ENCODE measurements at regions of chr4 and their contacts with region 1.

Region 1: DNA sequence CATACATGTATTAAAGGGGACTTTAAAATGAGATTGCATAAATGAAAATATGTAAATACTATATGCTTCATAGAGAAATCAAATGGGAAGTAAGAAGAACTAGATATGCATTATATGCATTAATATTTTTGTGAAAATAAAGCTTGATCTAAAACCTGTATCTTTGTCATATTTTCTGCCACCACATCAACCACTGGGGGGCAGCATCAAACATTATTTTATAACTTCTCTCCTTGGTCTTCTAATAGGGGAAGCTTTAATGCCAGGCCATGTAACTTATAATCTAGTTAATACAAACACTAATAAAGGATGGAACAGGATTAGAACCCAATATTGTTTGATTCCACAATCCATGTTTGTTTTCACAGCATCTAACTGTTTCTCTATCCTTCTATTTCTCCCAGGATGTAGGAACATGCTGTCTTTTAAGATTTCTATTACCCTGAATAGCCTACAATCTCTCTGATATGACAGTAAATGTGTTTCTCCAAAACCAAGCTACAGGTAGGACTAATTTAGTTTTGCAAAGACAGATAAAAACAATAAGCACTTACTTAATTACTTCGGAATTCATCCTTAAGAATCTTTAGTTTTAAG is 10.0 kb downstream of the QRFPR start:
- DNase-seq: peak in 2 of 3 donors; percentile 5
- H3K4me3 ChIP-seq: no peak overlapping the region
- H3K4me3 Mint-ChIP-seq: no peak overlapping the region
- H3K27ac ChIP-seq: no peak overlapping the region
- H3K27ac Mint-ChIP-seq: no peak overlapping the region
- H3K4me1 ChIP-seq: no peaks in the 10 kb centered on the region
- H3K4me1 Mint-ChIP-seq: no peaks in the 10 kb centered on the region
- H3K27me3 ChIP-seq: peaks cover 0 to 3% of the 10 kb centered on the region in 2 donors
- H3K27me3 Mint-ChIP-seq: peaks cover 2 to 9% (median 3%) of the 10 kb centered on the region in 3 donors
- CTCF ChIP-seq: peak; percentile 69

Region 2: DNA sequence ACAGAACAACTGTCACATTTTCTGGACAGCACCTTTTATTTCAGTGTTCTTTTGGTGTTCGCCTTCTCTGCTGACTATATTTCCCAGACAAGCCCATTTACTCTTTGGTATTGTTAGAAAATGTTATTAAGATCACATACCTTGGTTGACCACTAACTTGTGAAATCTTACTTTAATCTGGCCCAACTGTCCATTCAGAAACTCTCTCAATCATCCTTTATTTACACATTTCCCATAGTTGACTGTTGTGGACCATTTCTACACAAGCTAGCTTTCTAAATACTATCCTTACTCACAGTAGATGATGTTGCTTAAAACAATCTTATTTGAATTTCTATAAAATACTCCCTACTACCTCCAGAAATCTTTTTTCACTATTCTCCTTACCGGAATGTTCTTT is 54.7 kb before region 1 on chr4:
- intact Hi-C with region 1: no loop called
- DNase-seq: no peak
- H3K4me3 ChIP-seq: no peak overlapping the region
- H3K4me3 Mint-ChIP-seq: no peak overlapping the region
- H3K27ac ChIP-seq: no peak overlapping the region
- H3K27ac Mint-ChIP-seq: no peak overlapping the region
- H3K4me1 ChIP-seq: no peaks in the 10 kb centered on the region
- H3K4me1 Mint-ChIP-seq: no peaks in the 10 kb centered on the region
- H3K27me3 ChIP-seq: no peaks in the 10 kb centered on the region
- H3K27me3 Mint-ChIP-seq: peaks cover 0 to 2% (median 0%) of the 10 kb centered on the region in 3 donors
- CTCF ChIP-seq: no peak

Region 3: GRCh38 chr4:121360495-121360894 is 10.3 kb before region 1 on chr4:
- intact Hi-C with region 1: loop called in 1 of 2 experiments (anchors 1 kb)
- DNase-seq: no peak
- H3K4me3 ChIP-seq: no peak overlapping the region
- H3K4me3 Mint-ChIP-seq: no peak overlapping the region
- H3K27ac ChIP-seq: no peak overlapping the region
- H3K27ac Mint-ChIP-seq: no peak overlapping the region
- H3K4me1 ChIP-seq: no peaks in the 10 kb centered on the region
- H3K4me1 Mint-ChIP-seq: peaks cover 3% of the 10 kb centered on the region
- H3K27me3 ChIP-seq: no peaks in the 10 kb centered on the region
- H3K27me3 Mint-ChIP-seq: peaks cover 0 to 2% (median 0%) of the 10 kb centered on the region in 3 donors
- CTCF ChIP-seq: no peak

Region 4: GRCh38 chr4:121564840-121565375 is 194.1 kb after region 1 on chr4:
- intact Hi-C with region 1: no loop called
- DNase-seq: no peak
- H3K4me3 ChIP-seq: no peak overlapping the region
- H3K4me3 Mint-ChIP-seq: no peak overlapping the region
- H3K27ac ChIP-seq: no peak overlapping the region
- H3K27ac Mint-ChIP-seq: no peak overlapping the region
- H3K4me1 ChIP-seq: no peaks in the 10 kb centered on the region
- H3K4me1 Mint-ChIP-seq: no peaks in the 10 kb centered on the region
- H3K27me3 ChIP-seq: no peaks in the 10 kb centered on the region
- H3K27me3 Mint-ChIP-seq: no peaks in the 10 kb centered on the region
- CTCF ChIP-seq: no peak

Region 5: GRCh38 chr4:122099896-122100295 is 729.1 kb after region 1 on chr4:
- intact Hi-C with region 1: loop called in 1 of 2 experiments (anchors 10 kb)
- DNase-seq: no peak
- H3K4me3 ChIP-seq: no peak overlapping the region
- H3K4me3 Mint-ChIP-seq: peak overlapping the region in 1 of 2 donors; percentile 23
- H3K27ac ChIP-seq: no peak overlapping the region
- H3K27ac Mint-ChIP-seq: no peak overlapping the region
- H3K4me1 ChIP-seq: no peaks in the 10 kb centered on the region
- H3K4me1 Mint-ChIP-seq: no peaks in the 10 kb centered on the region
- H3K27me3 ChIP-seq: no peaks in the 10 kb centered on the region
- H3K27me3 Mint-ChIP-seq: no peaks in the 10 kb centered on the region
- CTCF ChIP-seq: no peak